HepG2 (cell line): ENCODE measurements at regions of chr6 and their contacts with region 1.

Region 1: GRCh38 chr6:99241905-99242534 is 107.5 kb downstream of the FAXC start:
- DNase-seq: peak; percentile 1
- ATAC-seq: no peak
- H3K4me3 ChIP-seq: no peak overlapping the region
- H3K27ac ChIP-seq: no peak overlapping the region
- H3K4me1 ChIP-seq: no peaks in the 10 kb centered on the region
- H3K27me3 ChIP-seq: no peaks in the 10 kb centered on the region
- CTCF ChIP-seq: peak; percentile 50
- EP300 ChIP-seq: no peak
- POLR2A ChIP-seq: no peak
- RAD21 ChIP-seq: no peak

Region 2: DNA sequence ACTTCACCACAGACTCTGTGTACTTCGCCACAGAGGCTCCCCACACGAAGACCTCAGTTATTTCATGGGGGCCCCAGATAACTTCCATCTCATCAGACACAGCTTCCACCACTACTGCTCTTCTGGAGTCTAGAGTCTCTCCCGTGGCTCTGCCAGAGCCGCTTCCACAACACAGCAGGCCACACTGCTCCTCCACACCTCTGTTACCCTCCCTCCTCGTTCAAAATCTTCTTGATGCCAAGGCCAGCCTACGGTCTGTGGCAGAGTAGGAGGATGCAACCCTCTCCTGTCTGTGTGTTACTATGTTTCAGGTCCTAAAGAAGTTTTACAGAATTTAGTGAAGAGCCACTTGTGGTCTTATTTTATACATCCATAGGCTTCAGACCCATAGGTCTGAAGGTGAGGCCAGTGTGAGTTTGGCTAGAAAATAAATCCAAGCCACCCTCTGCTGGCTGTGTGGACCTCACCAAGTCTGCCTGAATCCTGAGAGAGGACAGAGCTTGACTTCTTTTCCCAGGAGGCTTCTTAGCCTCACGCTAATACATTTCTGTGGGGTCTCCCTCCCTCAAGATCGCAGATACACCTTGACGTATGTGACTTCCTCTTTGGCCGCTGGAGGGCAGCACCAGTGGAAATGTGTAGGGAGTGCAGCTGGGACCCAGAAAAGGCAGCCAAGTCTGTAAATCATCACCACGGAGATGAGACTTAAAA is 90.2 kb before region 1 on chr6:
- CTCF ChIA-PET with region 1: no interaction called
- POLR2A ChIA-PET with region 1: no interaction called
- in situ Hi-C with region 1: loop called (anchors 5 kb)
- intact Hi-C with region 1: loop called (anchors 2 kb)
- DNase-seq: peak; percentile 23
- ATAC-seq: peak; percentile 98
- H3K4me3 ChIP-seq: no peak overlapping the region
- H3K27ac ChIP-seq: no peak overlapping the region
- H3K4me1 ChIP-seq: no peaks in the 10 kb centered on the region
- H3K27me3 ChIP-seq: no peaks in the 10 kb centered on the region
- CTCF ChIP-seq: peak; percentile 73
- EP300 ChIP-seq: no peak
- POLR2A ChIP-seq: no peak
- RAD21 ChIP-seq: no peak

Region 3: DNA sequence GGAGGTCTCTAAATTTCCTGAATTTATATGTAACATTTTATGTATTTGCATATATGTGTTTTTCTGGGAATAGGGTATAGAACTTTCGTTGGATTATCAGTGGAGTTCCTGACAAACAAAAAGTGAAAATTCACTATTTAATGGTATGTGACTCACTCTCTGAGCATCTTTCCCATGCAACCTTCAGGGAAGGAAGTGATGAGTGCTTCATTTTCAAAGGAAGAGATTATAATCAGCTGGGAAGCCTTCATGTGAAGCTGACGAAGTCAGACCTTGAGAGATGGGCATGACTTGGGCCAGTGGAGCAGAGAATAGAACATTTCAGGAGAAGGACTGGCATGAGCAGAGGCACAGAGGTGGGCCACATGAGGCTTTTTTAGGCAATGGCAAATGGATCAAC is 34.7 kb after region 1 on chr6:
- CTCF ChIA-PET with region 1: no interaction called
- POLR2A ChIA-PET with region 1: no interaction called
- in situ Hi-C with region 1: no loop called
- intact Hi-C with region 1: no loop called
- DNase-seq: no peak
- ATAC-seq: no peak
- H3K4me3 ChIP-seq: no peak overlapping the region
- H3K27ac ChIP-seq: no peak overlapping the region
- H3K4me1 ChIP-seq: no peaks in the 10 kb centered on the region
- H3K27me3 ChIP-seq: no peaks in the 10 kb centered on the region
- CTCF ChIP-seq: no peak
- EP300 ChIP-seq: no peak
- POLR2A ChIP-seq: no peak
- RAD21 ChIP-seq: no peak

Region 4: GRCh38 chr6:99334526-99335127 is 92.6 kb after region 1 on chr6:
- CTCF ChIA-PET with region 1: no interaction called
- POLR2A ChIA-PET with region 1: no interaction called
- in situ Hi-C with region 1: no loop called
- intact Hi-C with region 1: no loop called
- DNase-seq: peak; percentile 58
- ATAC-seq: peak; percentile 94
- H3K4me3 ChIP-seq: no peak overlapping the region; a peak in 1 of 6 replicates
- H3K27ac ChIP-seq: no peak overlapping the region
- H3K4me1 ChIP-seq: peaks cover 5% of the 10 kb centered on the region; the same call in 1 of the 2 replicates
- H3K27me3 ChIP-seq: no peaks in the 10 kb centered on the region
- CTCF ChIP-seq: peak; percentile 64
- EP300 ChIP-seq: no peak
- POLR2A ChIP-seq: no peak
- RAD21 ChIP-seq: no peak